Ascending aorta (tissue), 2 donors: ENCODE measurements at regions of chr3 and their contacts with region 1.

Region 1: DNA sequence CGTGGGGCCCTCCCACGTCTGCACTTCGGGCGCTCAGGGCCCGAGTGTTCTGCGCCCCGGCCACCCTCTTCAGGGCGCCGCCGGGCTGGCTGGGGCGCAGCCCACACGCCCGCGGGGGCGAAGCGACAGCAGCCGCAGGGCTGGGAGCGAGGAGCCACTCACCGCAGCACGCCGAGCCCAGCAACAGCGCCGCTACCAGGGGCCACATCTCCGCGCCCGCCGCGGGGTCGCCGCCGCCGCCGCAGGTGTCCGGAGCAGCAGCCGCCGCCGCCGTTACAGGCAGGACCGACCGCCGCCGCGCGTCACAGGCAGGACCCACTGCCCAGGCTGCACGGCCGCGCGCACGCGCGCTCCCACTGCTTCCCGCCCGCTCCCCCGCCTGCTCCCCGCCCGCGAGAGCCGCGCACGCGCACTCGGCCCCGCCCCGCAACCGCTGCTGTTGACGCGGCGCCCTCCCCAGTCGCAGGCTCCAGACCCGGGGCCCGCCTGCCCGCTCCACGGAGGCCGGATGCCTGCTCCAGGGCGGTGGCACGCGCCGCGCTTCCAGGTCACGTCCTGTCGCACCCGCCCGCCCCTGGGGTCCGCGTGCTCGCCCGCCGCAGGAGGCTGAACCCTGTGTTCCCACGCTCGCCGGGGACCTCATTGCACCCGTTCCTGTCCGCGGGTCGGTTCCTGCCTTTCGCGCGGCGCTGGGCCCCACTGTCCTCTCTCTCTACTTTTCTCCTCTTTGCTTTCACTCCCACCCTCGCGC is at the start of gene CD47:
- DNase-seq: peak; percentile 75 to 97
- H3K4me3 ChIP-seq: peak within 1 kb of the TSS; percentile 92 to 100
- H3K27ac ChIP-seq: peak within 1 kb of the TSS; percentile 86 to 96
- H3K4me1 ChIP-seq: peaks cover 0 to 6% of the 10 kb centered on the region in 2 donors
- H3K27me3 ChIP-seq: no peaks in the 10 kb centered on the region
- CTCF ChIP-seq: no peak
- total RNA-seq, gene CD47: 24.5 TPM

Region 2: DNA sequence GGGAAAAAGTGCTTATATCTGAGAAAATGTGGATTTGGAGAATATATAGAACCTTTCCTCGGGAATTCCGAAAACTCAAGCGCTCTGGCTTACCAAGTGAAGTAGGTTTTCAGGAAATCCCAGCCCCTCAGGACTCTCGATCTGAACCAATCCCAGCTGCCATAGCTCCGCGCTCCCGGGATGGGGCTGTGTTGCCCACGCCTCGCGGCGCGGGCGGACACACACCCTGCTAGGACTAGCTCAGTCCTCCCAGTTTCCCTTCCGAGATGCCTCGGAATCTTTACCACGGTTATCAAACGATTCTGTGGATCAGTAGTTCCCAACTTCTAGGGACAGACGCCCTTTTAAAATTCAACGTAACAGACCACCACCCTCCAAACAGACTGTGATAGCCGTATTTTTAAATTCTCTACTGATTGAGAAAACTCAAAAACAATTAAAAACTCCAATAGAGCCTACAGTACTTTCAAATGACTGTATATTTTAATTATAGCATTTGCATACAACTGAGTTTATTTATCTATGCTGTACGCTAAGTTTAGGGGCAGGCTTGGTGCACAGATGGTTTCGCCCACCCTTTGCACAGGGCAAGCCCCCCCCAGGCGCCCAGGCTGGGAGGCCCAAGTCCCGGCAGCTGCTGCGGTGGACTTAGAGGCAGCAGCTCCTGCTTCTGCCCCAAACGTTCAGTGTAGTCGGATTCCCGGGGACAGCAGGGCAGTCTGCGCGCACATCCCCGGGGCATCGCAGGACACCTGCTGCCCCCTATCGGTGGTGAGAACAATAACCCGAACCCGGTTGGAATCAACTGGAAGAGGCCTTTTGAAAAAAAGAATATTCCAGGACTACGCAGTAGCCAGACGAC is 661.3 kb before region 1 on chr3:
- intact Hi-C with region 1: loop called (anchors 5 kb)
- DNase-seq: peak; percentile 13 to 86
- H3K4me3 ChIP-seq: peak overlapping the region; percentile 84 to 85
- H3K27ac ChIP-seq: peak overlapping the region; percentile 99 to 100
- H3K4me1 ChIP-seq: peaks cover 0 to 9% of the 10 kb centered on the region in 2 donors
- H3K27me3 ChIP-seq: no peaks in the 10 kb centered on the region
- CTCF ChIP-seq: peak; percentile 78 to 85 (median 83)

Region 3: DNA sequence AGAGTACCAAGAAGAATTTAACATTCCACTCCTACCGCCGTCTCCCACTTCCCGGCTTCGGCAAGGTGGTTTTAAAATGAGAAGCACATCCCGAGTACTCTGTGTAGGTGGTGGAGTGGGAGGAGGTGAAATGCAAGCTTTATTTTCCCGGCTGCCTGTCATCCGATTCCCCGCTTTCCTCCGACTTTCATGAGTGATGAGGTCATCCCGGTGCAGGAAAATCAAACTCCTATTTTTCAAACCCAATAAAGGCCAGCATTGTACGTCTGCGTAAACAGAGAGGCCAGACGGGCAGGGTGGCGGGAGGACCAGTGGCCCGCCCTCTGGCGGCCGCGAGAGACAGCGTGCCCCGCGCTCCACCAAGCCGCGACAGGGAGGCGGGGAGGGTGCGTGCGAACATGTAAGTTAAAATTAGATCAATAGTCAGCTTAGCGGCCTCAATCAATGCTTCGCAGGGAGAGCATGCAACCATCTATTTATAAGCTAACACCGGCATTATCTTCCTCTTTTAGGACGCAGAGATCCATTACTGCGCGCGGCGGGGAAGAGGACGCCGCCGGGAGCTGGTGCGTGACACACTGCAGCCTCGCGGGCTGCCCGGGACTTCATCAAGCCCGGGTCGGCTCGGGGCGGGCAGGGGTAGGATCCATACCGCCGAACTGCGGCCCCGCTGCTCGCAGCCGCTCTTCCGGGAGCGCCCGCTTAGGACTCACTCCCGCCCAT is 163.4 kb before region 1 on chr3:
- intact Hi-C with region 1: loop called (anchors 5 kb)
- DNase-seq: peak in 1 of 2 donors; percentile 83
- H3K4me3 ChIP-seq: peak overlapping the region; percentile 51 to 75
- H3K27ac ChIP-seq: no peak overlapping the region
- H3K4me1 ChIP-seq: no peaks in the 10 kb centered on the region
- H3K27me3 ChIP-seq: no peaks in the 10 kb centered on the region
- CTCF ChIP-seq: peak; percentile 70 to 96 (median 91)

Region 4: DNA sequence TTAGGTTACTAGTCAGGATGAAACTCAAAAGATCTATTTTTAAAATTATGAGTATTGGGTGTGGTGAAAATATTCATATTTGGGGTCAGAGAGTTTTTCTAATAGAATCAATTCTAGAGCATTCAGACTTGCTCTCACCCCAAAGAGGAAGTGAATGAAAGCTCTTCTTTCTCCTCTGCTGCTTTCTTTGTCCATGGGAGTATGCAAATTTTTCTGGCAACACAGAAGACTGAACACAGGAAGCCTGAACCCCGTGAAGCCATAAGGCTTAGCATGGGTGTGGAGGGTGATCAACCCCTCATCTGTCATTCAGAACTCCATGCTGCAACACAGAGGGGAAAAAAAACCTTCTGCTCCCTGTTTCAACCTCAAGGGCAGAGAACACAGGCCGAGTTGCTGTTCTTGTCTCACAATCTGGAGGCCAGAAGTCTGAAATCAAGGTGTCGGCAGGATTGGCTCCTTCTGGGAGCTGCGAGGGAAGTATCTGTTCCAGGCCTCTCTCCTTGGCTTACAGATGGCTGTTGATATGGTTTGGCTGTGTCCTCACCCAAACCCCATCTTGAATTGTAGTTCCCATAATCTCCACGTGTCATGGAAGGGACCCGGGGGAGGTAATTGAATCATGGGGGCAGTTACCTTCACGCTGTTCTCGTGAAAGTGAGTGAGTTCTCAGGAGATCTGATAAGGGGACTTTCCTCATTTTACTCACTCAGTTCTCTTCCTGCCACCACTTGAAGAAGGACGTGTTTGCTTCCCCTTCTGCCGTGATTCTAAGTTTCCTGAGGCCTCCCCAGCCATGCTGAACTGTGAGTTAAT is 33.7 kb after region 1 on chr3:
- intact Hi-C with region 1: loop called (anchors 2 kb)
- DNase-seq: no peak
- H3K4me3 ChIP-seq: no peak overlapping the region
- H3K27ac ChIP-seq: no peak overlapping the region
- H3K4me1 ChIP-seq: no peaks in the 10 kb centered on the region
- H3K27me3 ChIP-seq: no peaks in the 10 kb centered on the region
- CTCF ChIP-seq: no peak